ENCODE measurements at regions of chr3 and their contacts with region 1.

Region 1: GRCh38 chr3:14358426-14359211 is 43.8 kb upstream of the SLC6A6 start:
- DNase-seq: no peak
- H3K4me3 ChIP-seq: no peak overlapping the region
- H3K27ac ChIP-seq: no peak overlapping the region
- H3K4me1 ChIP-seq: peaks cover 0 to under 1% (median under 1%) of the 10 kb centered on the region in 4 experiments; a peak in 5 of 7 replicates
- H3K27me3 ChIP-seq: no peaks in the 10 kb centered on the region
- CTCF ChIP-seq: 0 out of 4 replicates have a peak, but pooled peaks of 1 of the 3 experiments have one; percentile 9
- EP300 ChIP-seq: no peak
- POLR2A ChIP-seq: no peak
- RAD21 ChIP-seq: 0 out of 4 replicates have a peak, but pooled peaks of 1 of the 2 experiments have one; percentile 5

Region 2: DNA sequence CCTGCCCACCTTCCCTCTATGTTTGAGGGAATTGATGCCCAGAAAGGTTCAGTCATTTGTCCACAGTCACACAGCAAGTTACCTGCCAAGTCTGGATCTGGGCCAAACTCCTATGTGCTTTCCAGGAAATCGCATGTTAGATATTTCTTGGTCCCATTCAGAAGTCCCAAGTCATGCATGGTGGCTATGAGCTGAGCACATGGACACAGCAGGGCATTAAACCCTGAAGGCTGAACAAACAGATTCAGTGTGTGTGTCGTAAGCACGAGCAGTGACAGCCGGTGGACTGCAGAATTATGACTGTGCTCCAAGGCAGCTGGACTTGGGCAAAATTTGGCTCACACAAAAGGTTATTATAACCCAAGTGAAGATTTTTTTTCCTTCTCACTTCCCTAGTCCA is 32.4 kb after region 1 on chr3:
- CTCF ChIA-PET with region 1: interaction called, 18 read pairs
- POLR2A ChIA-PET with region 1: no interaction called
- DNase-seq: no peak
- H3K4me3 ChIP-seq: no peak overlapping the region
- H3K27ac ChIP-seq: no peak overlapping the region
- H3K4me1 ChIP-seq: peaks cover 0 to 5% (median 3%) of the 10 kb centered on the region in 4 experiments; a peak in 6 of 7 replicates
- H3K27me3 ChIP-seq: no peaks in the 10 kb centered on the region
- CTCF ChIP-seq: no peak
- EP300 ChIP-seq: no peak
- POLR2A ChIP-seq: no peak
- RAD21 ChIP-seq: no peak